Pancreas (tissue), 10 donors: ENCODE measurements at regions of chr14 and their contacts with region 1.

Region 1: GRCh38 chr14:103463149-103463548 is 59.5 kb downstream of the CKB start:
- DNase-seq: no peak
- ATAC-seq: no peak
- H3K4me3 ChIP-seq: no peak overlapping the region
- H3K27ac ChIP-seq: no peak overlapping the region
- H3K4me1 ChIP-seq: no peaks in the 10 kb centered on the region
- H3K27me3 ChIP-seq: no peaks in the 10 kb centered on the region
- CTCF ChIP-seq: no peak

Region 2: GRCh38 chr14:103418481-103418818 is 44.7 kb before region 1 on chr14:
- intact Hi-C with region 1: loop called in 1 of 3 experiments (anchors 10 kb)
- DNase-seq: no peak
- ATAC-seq: peak in 2 of 4 donors; percentile 43 to 60
- H3K4me3 ChIP-seq: no peak overlapping the region
- H3K27ac ChIP-seq: no peak overlapping the region
- H3K4me1 ChIP-seq: peaks cover 4 to 14% (median 11%) of the 10 kb centered on the region in 3 donors
- H3K27me3 ChIP-seq: no peaks in the 10 kb centered on the region
- CTCF ChIP-seq: no peak